MCF 10A (cell line): ENCODE measurements at regions of chr2 and their contacts with region 1.

Region 1: GRCh38 chr2:38947240-38948239 is 57.9 kb downstream of the ARHGEF33 start:
- DNase-seq: peak; percentile 88
- H3K4me3 Mint-ChIP-seq: no peak overlapping the region
- H3K27ac Mint-ChIP-seq: peak overlapping the region; percentile 32
- H3K4me1 Mint-ChIP-seq: peaks cover 8% of the 10 kb centered on the region
- H3K27me3 Mint-ChIP-seq: no peaks in the 10 kb centered on the region
- CTCF ChIP-seq: peak; percentile 71

Region 2: DNA sequence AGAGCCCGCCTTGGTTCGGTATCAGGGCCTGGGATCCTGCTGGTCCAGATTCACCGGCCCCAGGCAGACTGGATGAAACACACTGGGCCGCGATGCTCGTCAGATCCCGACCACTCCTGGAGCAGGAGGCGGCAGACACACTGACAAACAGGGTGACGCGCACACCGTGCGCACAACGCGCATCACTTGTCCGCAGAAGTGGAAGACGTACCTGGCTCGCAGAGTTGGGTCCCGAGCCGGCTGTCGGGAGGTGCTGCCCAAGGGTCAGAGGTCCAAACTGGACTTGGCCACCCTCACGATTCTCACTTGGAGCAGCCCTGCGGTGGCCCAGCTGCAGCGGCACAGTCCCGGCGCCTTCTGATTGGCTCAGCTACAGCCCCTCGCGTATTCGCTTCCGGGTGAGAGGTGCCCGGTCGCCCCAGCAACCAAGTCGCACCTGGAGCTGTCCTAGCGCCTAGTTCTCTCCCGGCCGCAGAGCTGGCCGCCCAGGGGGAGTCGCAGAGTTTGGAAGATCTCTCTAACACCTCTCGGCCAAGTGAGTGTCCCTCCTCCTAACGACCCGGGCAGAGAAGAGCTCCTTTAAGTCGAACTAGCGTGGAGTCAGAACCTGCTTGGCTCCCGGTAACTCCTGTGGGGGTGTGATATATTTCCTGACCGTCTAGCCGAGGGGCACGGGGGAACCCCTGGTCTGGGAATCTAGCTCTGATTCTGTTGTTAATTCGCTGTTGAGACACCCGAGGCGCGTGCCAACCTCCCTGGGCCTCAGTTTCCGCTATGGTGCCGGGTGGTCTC is 71.8 kb before region 1 on chr2 and contains the starts of genes DHX57 and MORN2:
- CTCF ChIA-PET with region 1: interaction called, 13 read pairs
- POLR2A ChIA-PET with region 1: interaction called, 10 read pairs
- intact Hi-C with region 1: no loop called
- DNase-seq: peak; percentile 82
- H3K4me3 Mint-ChIP-seq: peak within 1 kb of the TSS; percentile 91
- H3K27ac Mint-ChIP-seq: peak within 1 kb of the TSS; percentile 89
- H3K4me1 Mint-ChIP-seq: peaks cover 6% of the 10 kb centered on the region
- H3K27me3 Mint-ChIP-seq: no peaks in the 10 kb centered on the region
- CTCF ChIP-seq: no peak
- total RNA-seq, gene DHX57: 17.9 and 21.3 TPM in 2 replicates
- total RNA-seq, gene MORN2: 13.9 and 14.8 TPM in 2 replicates

Region 3: GRCh38 chr2:38935568-38936172 is 11.9 kb before region 1 on chr2:
- CTCF ChIA-PET with region 1: interaction called, 38 read pairs
- POLR2A ChIA-PET with region 1: no interaction called
- intact Hi-C with region 1: no loop called
- DNase-seq: peak; percentile 34
- H3K4me3 Mint-ChIP-seq: no peak overlapping the region
- H3K27ac Mint-ChIP-seq: peak overlapping the region; percentile 40
- H3K4me1 Mint-ChIP-seq: peaks cover 13% of the 10 kb centered on the region
- H3K27me3 Mint-ChIP-seq: no peaks in the 10 kb centered on the region
- CTCF ChIP-seq: no peak

Region 4: DNA sequence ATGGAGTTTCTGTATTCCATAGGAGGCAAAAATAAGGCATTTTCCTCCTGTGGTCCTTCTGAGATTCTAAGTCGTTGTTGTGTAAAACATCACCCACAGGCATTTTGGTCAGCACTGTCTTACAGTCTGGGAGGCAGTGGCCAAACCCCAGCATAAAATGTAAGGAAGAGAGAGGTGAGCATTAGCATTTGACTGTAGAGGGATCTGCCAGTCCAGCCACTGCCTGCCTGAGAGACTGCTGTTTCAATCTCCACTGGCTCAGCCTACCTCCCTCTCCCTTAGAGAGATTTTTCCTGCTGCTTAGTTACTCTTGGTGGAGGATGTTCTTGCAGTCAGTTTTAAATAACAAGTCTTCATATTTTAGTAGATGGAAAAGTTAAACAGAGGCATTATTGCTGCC is 19.1 kb after region 1 on chr2:
- CTCF ChIA-PET with region 1: interaction called, 15 read pairs
- POLR2A ChIA-PET with region 1: interaction called, 3 read pairs
- intact Hi-C with region 1: no loop called
- DNase-seq: peak; percentile 3
- H3K4me3 Mint-ChIP-seq: no peak overlapping the region
- H3K27ac Mint-ChIP-seq: no peak overlapping the region
- H3K4me1 Mint-ChIP-seq: no peaks in the 10 kb centered on the region
- H3K27me3 Mint-ChIP-seq: no peaks in the 10 kb centered on the region
- CTCF ChIP-seq: no peak

Region 5: GRCh38 chr2:39059366-39059952 is 111.9 kb after region 1 on chr2:
- CTCF ChIA-PET with region 1: interaction called, 9 read pairs
- POLR2A ChIA-PET with region 1: interaction called, 3 read pairs
- intact Hi-C with region 1: loop called (anchors 5 kb)
- DNase-seq: peak; percentile 48
- H3K4me3 Mint-ChIP-seq: no peak overlapping the region
- H3K27ac Mint-ChIP-seq: no peak overlapping the region
- H3K4me1 Mint-ChIP-seq: no peaks in the 10 kb centered on the region
- H3K27me3 Mint-ChIP-seq: no peaks in the 10 kb centered on the region
- CTCF ChIP-seq: peak; percentile 55

Region 6: GRCh38 chr2:39394516-39394961 is 447.0 kb after region 1 on chr2:
- CTCF ChIA-PET with region 1: no interaction called
- POLR2A ChIA-PET with region 1: no interaction called
- intact Hi-C with region 1: no loop called
- DNase-seq: no peak
- H3K4me3 Mint-ChIP-seq: no peak overlapping the region
- H3K27ac Mint-ChIP-seq: no peak overlapping the region
- H3K4me1 Mint-ChIP-seq: peaks cover 25% of the 10 kb centered on the region
- H3K27me3 Mint-ChIP-seq: no peaks in the 10 kb centered on the region
- CTCF ChIP-seq: no peak

Region 7: DNA sequence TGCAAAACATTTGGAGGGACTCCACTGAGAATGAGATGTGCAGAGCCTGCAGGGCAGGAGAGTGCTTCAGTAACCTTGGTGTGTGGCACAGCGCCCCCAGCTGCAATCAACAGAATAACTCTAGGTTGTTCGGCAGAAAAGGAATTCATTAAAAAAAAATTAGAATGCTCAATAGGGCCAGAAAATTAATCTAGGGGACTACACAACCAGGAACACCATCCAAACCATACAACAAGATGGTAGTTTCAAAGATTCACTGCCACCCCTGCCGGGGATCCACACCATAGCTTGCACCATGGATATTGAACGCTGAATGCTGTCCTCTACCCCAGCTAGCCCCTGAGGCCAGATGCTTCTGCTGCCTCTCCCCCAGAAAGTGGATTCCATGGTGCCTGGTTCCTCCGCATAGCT is 781.4 kb after region 1 on chr2:
- CTCF ChIA-PET with region 1: no interaction called
- POLR2A ChIA-PET with region 1: no interaction called
- intact Hi-C with region 1: loop called (anchors 5 kb)
- DNase-seq: peak; percentile 43
- H3K4me3 Mint-ChIP-seq: no peak overlapping the region
- H3K27ac Mint-ChIP-seq: no peak overlapping the region
- H3K4me1 Mint-ChIP-seq: peaks cover 3% of the 10 kb centered on the region
- H3K27me3 Mint-ChIP-seq: no peaks in the 10 kb centered on the region
- CTCF ChIP-seq: peak; percentile 69